GM10248 (cell line): ENCODE measurements at regions of chr7 and their contacts with region 1.

Region 1: GRCh38 chr7:22726345-22727185 is 435 bp upstream of the IL6 start:
- DNase-seq: peak; percentile 76
- CTCF ChIP-seq: peak; percentile 79

Region 2: DNA sequence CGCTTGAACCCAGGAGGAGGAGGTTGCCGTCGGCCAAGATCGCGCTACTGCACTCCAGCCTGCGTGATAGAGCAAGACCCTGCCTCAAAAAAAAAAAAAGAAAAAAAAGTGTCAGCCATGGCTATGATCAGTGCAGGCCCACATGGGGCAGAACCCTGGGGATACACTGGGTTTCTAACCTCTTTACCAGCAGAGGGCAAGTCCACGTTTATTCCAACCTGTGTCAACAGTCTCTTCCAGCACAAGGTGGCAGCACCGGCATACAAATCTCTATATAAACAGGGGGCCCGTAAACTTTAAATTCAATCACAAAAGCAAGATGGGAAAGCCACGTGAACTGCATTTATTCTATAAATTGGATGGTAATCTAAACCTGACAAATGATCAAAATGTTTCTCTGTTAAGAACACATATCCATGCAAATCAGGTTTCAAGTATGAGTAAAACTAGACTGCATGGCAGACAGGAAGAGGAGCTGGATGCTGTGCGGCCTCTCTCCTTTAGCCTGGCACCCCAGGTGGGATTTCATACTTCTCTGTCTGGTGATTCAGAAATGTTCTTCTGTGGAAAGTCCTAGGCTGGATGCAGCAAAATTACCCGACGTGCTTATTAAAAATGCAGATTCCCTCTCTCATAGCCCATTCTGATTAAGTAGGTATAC is 166.6 kb before region 1 on chr7:
- CTCF ChIA-PET with region 1: interaction called, 282 read pairs
- POLR2A ChIA-PET with region 1: no interaction called
- DNase-seq: peak; percentile 72
- CTCF ChIP-seq: peak; percentile 80

Region 3: DNA sequence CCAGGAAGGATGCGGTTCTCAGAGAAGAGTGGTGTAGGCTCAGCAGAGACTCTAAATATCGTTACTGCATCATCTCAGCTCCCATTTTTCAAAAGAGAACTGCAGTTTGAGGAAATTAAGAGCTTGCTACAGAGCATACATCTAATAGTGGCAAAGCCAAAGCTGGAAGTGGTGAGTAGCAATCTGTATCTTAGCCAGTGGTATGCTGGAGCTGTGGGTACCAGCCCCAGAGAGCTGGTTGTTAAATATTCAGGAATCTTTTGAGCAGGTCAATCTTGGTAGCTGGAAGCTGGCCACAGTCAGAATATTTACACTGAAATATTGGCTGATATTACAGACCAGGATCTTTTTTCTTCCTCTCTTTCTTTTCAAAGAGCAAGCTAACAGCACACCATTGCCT is 138.2 kb before region 1 on chr7:
- CTCF ChIA-PET with region 1: interaction called, 16 read pairs
- POLR2A ChIA-PET with region 1: no interaction called
- DNase-seq: no peak
- CTCF ChIP-seq: no peak

Region 4: GRCh38 chr7:22712999-22713398 is 13.6 kb before region 1 on chr7:
- CTCF ChIA-PET with region 1: interaction called, 68 read pairs
- POLR2A ChIA-PET with region 1: interaction called, 3 read pairs
- DNase-seq: no peak
- CTCF ChIP-seq: no peak

Region 5: DNA sequence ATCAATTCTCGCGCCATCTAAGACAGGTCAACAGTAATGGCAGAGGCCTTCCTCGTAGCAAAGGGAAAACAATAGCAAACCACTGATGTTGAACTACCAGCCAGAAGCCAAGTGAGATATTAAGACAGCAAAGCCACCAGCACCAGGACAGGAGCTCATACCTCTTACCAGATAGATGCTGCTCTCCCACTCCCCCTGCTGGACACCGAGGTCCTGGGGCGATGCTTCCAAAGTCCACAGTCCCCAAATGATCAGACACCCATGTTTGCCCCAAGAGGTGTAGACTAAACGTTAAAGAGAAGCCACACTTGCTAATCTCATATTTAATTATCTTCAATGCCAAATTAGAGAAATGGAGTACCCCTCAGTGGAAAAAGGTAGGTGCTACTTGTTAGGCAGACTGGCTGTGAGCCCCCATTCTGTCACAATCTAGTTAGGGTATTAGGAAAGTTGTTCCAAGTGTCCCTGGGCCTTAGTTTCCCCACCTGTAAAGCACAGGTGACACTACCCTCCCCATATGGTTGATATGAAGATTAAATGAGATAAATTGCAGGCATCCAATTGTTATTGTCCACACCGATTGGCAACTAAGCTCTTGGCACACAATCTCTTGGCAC is 56.2 kb after region 1 on chr7:
- CTCF ChIA-PET with region 1: interaction called, 19 read pairs
- POLR2A ChIA-PET with region 1: no interaction called
- DNase-seq: peak; percentile 84
- CTCF ChIP-seq: peak; percentile 87

Region 6: DNA sequence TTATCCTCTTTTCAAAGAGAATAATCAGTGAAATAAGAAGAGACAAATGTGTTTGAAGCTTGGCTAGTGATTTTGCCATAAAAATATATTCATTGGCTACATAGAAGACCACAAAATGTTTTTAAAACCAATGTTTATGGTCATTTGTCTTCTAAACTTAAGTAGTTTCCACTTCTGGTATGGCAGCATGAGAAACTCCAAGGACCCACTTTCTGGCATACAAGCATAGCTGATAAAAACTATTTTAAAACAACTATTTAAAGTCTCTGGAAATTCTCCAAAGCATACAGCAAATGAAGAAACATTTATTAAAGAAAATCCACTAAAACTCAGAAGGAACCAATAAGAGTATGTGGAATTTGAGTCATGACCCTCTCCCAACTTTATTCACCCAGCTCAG is 185.3 kb after region 1 on chr7:
- CTCF ChIA-PET with region 1: no interaction called
- POLR2A ChIA-PET with region 1: no interaction called
- DNase-seq: no peak
- CTCF ChIP-seq: no peak